Mammary epithelial cell (primary cell): ENCODE measurements at regions of chr4 and their contacts with region 1.

Region 1: GRCh38 chr4:48340965-48341775 is at the start of gene SLAIN2:
- DNase-seq: peak; percentile 95
- H3K4me3 ChIP-seq: peak within 1 kb of the TSS; percentile 75 to 96 (median 88)
- H3K27ac ChIP-seq: peak within 1 kb of the TSS; percentile 84
- H3K4me1 ChIP-seq: peaks cover 56% of the 10 kb centered on the region
- H3K27me3 ChIP-seq: no peaks in the 10 kb centered on the region
- CTCF ChIP-seq: peak in 1 of 2 donors; percentile 37
- total RNA-seq, gene SLAIN2: 79.9 to 95.9 TPM

Region 2: DNA sequence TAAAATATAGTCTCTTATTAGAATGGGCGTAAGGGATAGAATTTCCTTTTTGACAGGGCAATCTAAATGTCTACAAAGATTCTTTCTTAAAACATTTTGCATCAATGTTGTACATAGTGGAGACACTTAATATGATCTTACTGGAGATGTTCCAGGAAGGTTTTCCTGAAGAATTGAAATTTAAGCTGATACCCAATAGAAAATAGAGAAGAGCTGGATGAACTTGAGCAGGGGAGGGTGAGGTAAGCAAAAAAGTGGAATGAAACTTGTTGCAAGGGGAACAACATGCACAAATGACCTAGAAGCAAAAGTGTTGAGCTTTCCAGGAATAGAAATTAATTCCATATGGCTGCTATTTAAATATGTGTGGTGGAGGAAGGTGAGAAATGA is 19.8 kb after region 1 on chr4:
- CTCF ChIA-PET with region 1: no interaction called
- dilution Hi-C with region 1: no loop called
- in situ Hi-C with region 1: no loop called
- intact Hi-C with region 1: no loop called
- DNase-seq: no peak
- H3K4me3 ChIP-seq: no peak overlapping the region
- H3K27ac ChIP-seq: peak overlapping the region; percentile 60
- H3K4me1 ChIP-seq: peaks cover 16% of the 10 kb centered on the region
- H3K27me3 ChIP-seq: no peaks in the 10 kb centered on the region
- CTCF ChIP-seq: no peak

Region 3: GRCh38 chr4:48380583-48381167 is 39.5 kb after region 1 on chr4:
- CTCF ChIA-PET with region 1: no interaction called
- dilution Hi-C with region 1: no loop called
- in situ Hi-C with region 1: no loop called
- intact Hi-C with region 1: loop called (anchors 2 kb)
- DNase-seq: peak; percentile 73
- H3K4me3 ChIP-seq: no peak overlapping the region
- H3K27ac ChIP-seq: peak overlapping the region; percentile 43
- H3K4me1 ChIP-seq: peaks cover 23% of the 10 kb centered on the region
- H3K27me3 ChIP-seq: no peaks in the 10 kb centered on the region
- CTCF ChIP-seq: no peak

Region 4: GRCh38 chr4:48681856-48682255 is 340.7 kb after region 1 on chr4:
- CTCF ChIA-PET with region 1: no interaction called
- dilution Hi-C with region 1: no loop called
- in situ Hi-C with region 1: no loop called
- intact Hi-C with region 1: loop called (anchors 10 kb)
- DNase-seq: peak; percentile 50
- H3K4me3 ChIP-seq: no peak overlapping the region
- H3K27ac ChIP-seq: no peak overlapping the region
- H3K4me1 ChIP-seq: no peaks in the 10 kb centered on the region
- H3K27me3 ChIP-seq: no peaks in the 10 kb centered on the region
- CTCF ChIP-seq: peak; percentile 38 to 69